Heart left ventricle (tissue), 16 donors: ENCODE measurements at regions of chr19 and their contacts with region 1.

Region 1: GRCh38 chr19:18557474-18558201 is at the start of gene KXD1:
- DNase-seq: peak; percentile 98 to 99 (median 98)
- ATAC-seq: peak; percentile 96 to 99 (median 97)
- H3K4me3 ChIP-seq: peak within 1 kb of the TSS; percentile 64 to 99 (median 92)
- H3K27ac ChIP-seq: peak within 1 kb of the TSS; percentile 64 to 99 (median 96)
- H3K4me1 ChIP-seq: peaks cover 5 to 36% (median 22%) of the 10 kb centered on the region in 12 donors
- H3K27me3 ChIP-seq: no peaks in the 10 kb centered on the region
- CTCF ChIP-seq: no peak
- POLR2A ChIP-seq: peak in 1 of 2 donors; percentile 77
- total RNA-seq, gene KXD1: 36.1 to 116 (median 46.7) TPM

Region 2: GRCh38 chr19:18450931-18451845 is 106.5 kb before region 1 on chr19:
- intact Hi-C with region 1: no loop called
- DNase-seq: peak; percentile 85 to 94 (median 88)
- ATAC-seq: peak; percentile 78 to 88 (median 86)
- H3K4me3 ChIP-seq: no peak overlapping the region
- H3K27ac ChIP-seq: peak overlapping the region in 1 of 12 donors; percentile 41
- H3K4me1 ChIP-seq: peaks cover 0 to 21% (median 8%) of the 10 kb centered on the region in 12 donors
- H3K27me3 ChIP-seq: no peaks in the 10 kb centered on the region
- CTCF ChIP-seq: peak; percentile 96 to 99 (median 98)
- POLR2A ChIP-seq: no peak

Region 3: DNA sequence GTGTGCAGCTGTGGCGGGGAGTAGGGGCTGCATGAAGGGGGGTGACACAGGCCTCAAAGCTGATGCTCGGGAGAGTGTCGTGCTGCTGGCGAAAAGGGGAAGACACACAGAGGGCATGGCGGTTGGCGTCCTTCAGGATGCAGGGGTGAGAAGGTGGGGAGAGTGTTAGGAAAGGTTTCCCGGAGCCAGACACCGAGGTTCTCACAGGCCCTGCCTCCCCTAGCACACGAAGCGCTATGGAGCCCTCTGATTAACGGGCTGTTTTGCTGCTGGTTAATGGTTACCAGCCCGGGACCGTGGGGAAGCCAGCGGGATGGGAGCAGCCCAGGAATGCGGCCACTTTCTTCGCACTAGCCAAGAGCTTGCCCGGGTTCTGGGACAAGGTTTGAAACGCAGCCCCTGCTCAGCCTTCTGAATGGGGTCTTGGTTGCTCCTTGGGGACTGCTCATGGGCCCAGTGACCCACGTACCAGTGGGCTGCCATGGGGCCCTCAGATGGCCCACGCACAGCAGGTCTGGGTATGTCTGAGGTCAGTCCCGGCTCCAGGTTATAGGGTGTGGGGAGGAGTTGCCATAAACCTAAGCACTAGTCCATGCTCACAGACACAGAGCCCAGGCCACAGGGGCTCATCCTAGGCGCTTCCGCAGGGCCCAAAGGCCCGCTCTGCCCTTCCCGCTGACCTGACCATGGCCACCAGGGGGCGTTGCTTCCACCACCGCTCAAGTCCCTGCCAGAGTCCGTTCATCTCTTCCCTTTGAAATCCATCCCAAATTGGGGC is 88.4 kb before region 1 on chr19:
- intact Hi-C with region 1: loop called in 4 of 10 experiments (anchors 5 to 10 kb)
- DNase-seq: peak; percentile 58 to 85 (median 67)
- ATAC-seq: peak; percentile 5 to 42 (median 24)
- H3K4me3 ChIP-seq: no peak overlapping the region
- H3K27ac ChIP-seq: peak overlapping the region in 2 of 12 donors; percentile 13 to 43
- H3K4me1 ChIP-seq: peaks cover 13 to 72% (median 61%) of the 10 kb centered on the region in 12 donors
- H3K27me3 ChIP-seq: no peaks in the 10 kb centered on the region
- CTCF ChIP-seq: peak; percentile 61 to 86 (median 77)
- POLR2A ChIP-seq: no peak

Region 4: GRCh38 chr19:18488838-18489626 is 68.6 kb before region 1 on chr19:
- intact Hi-C with region 1: loop called in 1 of 10 experiments (anchors 10 kb)
- DNase-seq: peak in 1 of 5 donors; percentile 67
- ATAC-seq: peak in 3 of 4 donors; percentile 17 to 51 (median 37)
- H3K4me3 ChIP-seq: no peak overlapping the region
- H3K27ac ChIP-seq: peak overlapping the region in 4 of 12 donors; percentile 10 to 45 (median 30)
- H3K4me1 ChIP-seq: peaks cover 9 to 85% (median 67%) of the 10 kb centered on the region in 12 donors
- H3K27me3 ChIP-seq: no peaks in the 10 kb centered on the region
- CTCF ChIP-seq: peak in 9 of 12 donors; percentile 9 to 48 (median 29)
- POLR2A ChIP-seq: no peak

Region 5: GRCh38 chr19:18521885-18522624 is 35.6 kb before region 1 on chr19 and contains the start of gene ELL:
- intact Hi-C with region 1: loop called in 3 of 10 experiments (anchors 5 kb)
- DNase-seq: peak; percentile 100
- ATAC-seq: peak; percentile 92 to 96 (median 95)
- H3K4me3 ChIP-seq: peak within 1 kb of the TSS; percentile 77 to 100 (median 96)
- H3K27ac ChIP-seq: peak within 1 kb of the TSS; percentile 64 to 99 (median 95)
- H3K4me1 ChIP-seq: peaks cover 0 to 33% (median 14%) of the 10 kb centered on the region in 12 donors
- H3K27me3 ChIP-seq: no peaks in the 10 kb centered on the region
- CTCF ChIP-seq: peak in 6 of 12 donors; percentile 4 to 57 (median 34)
- POLR2A ChIP-seq: peak; percentile 88 to 90
- total RNA-seq, gene ELL: 5.9 to 17.8 (median 9.1) TPM

Region 6: GRCh38 chr19:18542936-18543815 is 14.5 kb before region 1 on chr19 and contains the start of gene FKBP8:
- intact Hi-C with region 1: loop called in 1 of 10 experiments (anchors 1 kb)
- DNase-seq: peak; percentile 95 to 98 (median 95)
- ATAC-seq: peak; percentile 87 to 98 (median 98)
- H3K4me3 ChIP-seq: peak within 1 kb of the TSS; percentile 46 to 95 (median 69)
- H3K27ac ChIP-seq: peak within 1 kb of the TSS; percentile 73 to 94 (median 86)
- H3K4me1 ChIP-seq: peaks cover 0 to 22% (median 15%) of the 10 kb centered on the region in 12 donors
- H3K27me3 ChIP-seq: no peaks in the 10 kb centered on the region
- CTCF ChIP-seq: no peak
- POLR2A ChIP-seq: no peak
- total RNA-seq, gene FKBP8: 136 to 353 (median 157) TPM

Region 7: GRCh38 chr19:18571564-18572300 is 14.1 kb after region 1 on chr19 and contains the start of gene UBA52:
- intact Hi-C with region 1: loop called in 1 of 10 experiments (anchors 1 kb)
- DNase-seq: peak; percentile 97 to 99 (median 98)
- ATAC-seq: peak; percentile 90 to 99 (median 96)
- H3K4me3 ChIP-seq: peak within 1 kb of the TSS; percentile 71 to 100 (median 88)
- H3K27ac ChIP-seq: peak within 1 kb of the TSS; percentile 73 to 97 (median 90)
- H3K4me1 ChIP-seq: peaks cover 8 to 23% (median 17%) of the 10 kb centered on the region in 12 donors
- H3K27me3 ChIP-seq: no peaks in the 10 kb centered on the region
- CTCF ChIP-seq: no peak
- POLR2A ChIP-seq: peak; percentile 35 to 86
- total RNA-seq, gene UBA52: 336 to 944 (median 761) TPM

Region 8: DNA sequence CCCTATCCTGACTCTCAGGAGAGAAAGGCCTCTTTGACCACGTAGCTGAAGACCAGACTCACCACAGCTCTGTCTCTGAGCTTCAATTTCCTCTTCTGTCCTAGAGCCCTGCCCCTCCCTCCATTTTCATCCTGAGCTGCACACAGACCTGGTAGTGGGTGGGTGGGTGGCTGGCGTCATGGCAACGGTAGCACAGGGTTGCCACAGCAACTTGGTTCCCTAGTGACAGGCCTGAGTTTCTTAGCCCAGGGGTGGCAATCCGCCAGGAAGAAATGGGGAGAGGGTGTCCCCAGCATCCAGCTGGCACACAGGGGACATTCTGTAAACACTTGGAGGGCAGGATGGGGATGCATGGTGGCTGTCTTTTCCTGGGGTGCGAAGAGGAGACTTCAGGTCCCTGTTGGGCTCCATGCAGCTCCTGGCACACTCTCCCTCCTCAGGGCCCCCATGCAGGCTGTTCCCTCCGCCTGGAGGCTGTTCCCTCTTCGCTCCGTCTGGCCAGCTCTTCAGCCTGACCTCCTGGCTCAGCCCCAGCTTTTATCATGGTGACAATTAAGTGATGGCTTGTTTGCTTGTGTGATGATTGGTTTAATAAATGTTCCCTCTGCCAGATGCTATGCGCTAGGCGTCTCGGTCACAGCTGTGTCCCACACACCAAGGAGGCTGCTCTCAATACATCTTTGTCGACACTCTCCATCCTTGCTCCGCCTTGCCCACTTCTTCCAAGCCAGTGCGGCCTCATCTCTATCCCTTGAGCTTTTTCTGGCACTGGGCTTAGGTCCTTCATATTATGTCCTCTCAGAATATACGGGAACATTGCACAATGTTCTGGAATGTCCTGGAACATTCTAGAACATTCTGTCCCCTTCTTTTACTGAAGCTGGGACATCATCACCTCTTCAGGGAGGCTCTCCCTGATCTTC is 71.8 kb after region 1 on chr19:
- intact Hi-C with region 1: no loop called
- DNase-seq: peak in 1 of 5 donors; percentile 64
- ATAC-seq: peak; percentile 52 to 93 (median 76)
- H3K4me3 ChIP-seq: no peak overlapping the region
- H3K27ac ChIP-seq: peak overlapping the region in 1 of 12 donors; percentile 4
- H3K4me1 ChIP-seq: no peaks in the 10 kb centered on the region
- H3K27me3 ChIP-seq: no peaks in the 10 kb centered on the region
- CTCF ChIP-seq: no peak
- POLR2A ChIP-seq: no peak